ENCODE measurements at regions of chr3 and their contacts with region 1.

Region 1: GRCh38 chr3:52820736-52821135 is 9.7 kb downstream of the ITIH4 start:
- DNase-seq: peak; percentile 65
- CTCF ChIP-seq: peak; percentile 62

Region 2: DNA sequence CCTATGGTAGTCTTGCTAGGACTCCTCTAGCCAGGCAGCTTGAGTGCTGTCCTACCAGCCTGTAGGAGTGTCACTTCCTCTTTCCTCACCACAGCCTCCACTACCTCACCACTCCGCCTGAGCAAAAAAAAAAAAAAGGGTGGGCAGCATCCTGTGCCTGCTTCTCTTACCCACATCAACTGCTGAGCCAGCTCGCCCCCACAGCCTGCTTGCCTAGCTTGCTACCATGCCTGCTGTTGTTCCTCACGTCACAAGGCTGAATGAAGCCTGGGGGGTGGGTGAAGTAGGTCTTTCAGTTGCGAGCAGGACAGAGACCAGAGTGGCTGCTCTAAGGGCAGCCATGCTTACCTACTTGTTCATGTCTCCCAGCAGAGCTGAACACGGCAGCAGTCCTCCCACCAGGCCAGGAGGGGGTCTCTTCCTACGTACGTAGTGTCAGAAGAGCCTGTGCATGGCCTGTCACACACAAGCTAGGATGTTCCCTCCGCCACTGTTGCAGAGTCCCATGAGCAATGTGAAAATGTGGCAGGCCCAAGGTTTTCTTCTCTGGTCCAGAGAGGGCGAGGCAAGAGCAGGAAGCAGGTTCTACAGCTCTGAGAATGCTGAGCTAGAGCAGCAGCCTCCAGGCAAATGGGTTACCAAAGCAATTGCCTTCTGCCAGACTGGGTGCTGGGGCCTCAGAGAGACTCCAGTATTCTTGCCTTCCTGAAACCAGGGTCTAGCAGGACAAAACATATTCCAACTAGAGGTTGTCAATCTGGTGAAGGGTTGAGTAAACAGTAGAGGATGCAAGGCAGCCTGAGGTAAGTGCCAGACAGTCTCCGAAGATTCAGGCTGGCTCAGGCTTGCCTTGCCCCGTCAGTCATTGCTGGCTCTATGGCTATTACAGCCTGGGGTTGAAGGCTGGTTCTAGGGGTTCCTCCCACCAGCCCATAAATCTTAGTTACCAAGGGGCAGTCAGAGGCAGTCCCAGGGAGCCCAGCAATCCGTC is 567.1 kb before region 1 on chr3:
- CTCF ChIA-PET with region 1: no interaction called
- POLR2A ChIA-PET with region 1: no interaction called
- DNase-seq: peak; percentile 91
- CTCF ChIP-seq: no peak

Region 3: GRCh38 chr3:52406231-52406661 is 414.5 kb before region 1 on chr3:
- CTCF ChIA-PET with region 1: no interaction called
- POLR2A ChIA-PET with region 1: no interaction called
- DNase-seq: no peak
- CTCF ChIP-seq: no peak

Region 4: DNA sequence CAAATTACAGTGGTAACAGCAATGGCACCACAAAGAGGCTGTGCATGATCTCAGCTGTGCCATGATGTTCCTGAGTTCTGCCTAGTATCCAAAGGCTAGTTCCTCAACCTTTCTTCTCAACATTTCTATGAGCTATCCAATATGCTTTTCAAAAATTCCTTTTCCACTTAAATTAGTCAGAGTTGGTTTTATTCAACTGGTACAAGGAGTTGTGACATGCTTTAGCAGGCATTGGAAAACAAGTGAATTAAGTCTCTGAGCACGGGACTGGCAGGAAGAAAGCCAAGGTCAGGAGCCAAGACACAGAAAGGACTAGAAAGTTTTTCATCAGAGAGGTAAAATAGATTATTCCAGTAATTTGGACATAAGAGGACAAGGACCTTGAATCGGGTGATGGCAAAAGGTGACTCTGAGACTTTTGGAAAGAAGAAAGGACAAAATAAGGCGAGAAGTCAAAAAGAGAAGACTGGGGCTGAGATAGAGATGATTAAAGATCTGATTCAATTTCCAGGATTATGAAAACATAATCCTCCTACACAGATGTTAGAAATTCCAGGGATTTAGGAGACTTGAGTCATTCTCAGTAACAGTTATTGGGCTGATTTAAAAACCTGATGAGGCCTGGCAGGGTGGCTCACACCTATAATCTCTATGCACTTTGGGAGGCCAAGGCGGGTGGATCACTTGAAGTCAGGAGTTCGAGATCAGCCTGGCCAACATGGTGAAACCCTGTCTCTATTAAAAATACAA is 171.1 kb before region 1 on chr3:
- CTCF ChIA-PET with region 1: no interaction called
- POLR2A ChIA-PET with region 1: no interaction called
- DNase-seq: no peak
- CTCF ChIP-seq: no peak

Region 5: GRCh38 chr3:52809662-52810377 is 10.9 kb before region 1 on chr3:
- CTCF ChIA-PET with region 1: interaction called, 16 read pairs
- POLR2A ChIA-PET with region 1: no interaction called
- DNase-seq: no peak
- CTCF ChIP-seq: no peak